Activated CD8-positive, alpha-beta T cell treated with anti-CD3 and anti-CD28 coated beads, Interleukin-2, amount 10 ng/mL, durations not matched to agents 7 days and 5 days (primary cell): ENCODE measurements at regions of chr7 and their contacts with region 1.

Region 1: GRCh38 chr7:132580717-132581285 is 4.5 kb upstream of the PLXNA4 start:
- DNase-seq: peak; percentile 89
- ATAC-seq: peak; percentile 78
- H3K4me3 Mint-ChIP-seq: no peak overlapping the region
- H3K27ac Mint-ChIP-seq: no peak overlapping the region
- H3K4me1 Mint-ChIP-seq: peaks cover 30% of the 10 kb centered on the region
- H3K27me3 Mint-ChIP-seq: peaks cover 38% of the 10 kb centered on the region

Region 2: GRCh38 chr7:132318352-132319318 is 262.2 kb before region 1 on chr7:
- CTCF ChIA-PET with region 1: interaction called, 129 read pairs
- POLR2A ChIA-PET with region 1: interaction called, 3 read pairs
- DNase-seq: peak; percentile 88
- ATAC-seq: peak; percentile 97
- H3K4me3 Mint-ChIP-seq: peak overlapping the region; percentile 32
- H3K27ac Mint-ChIP-seq: peak overlapping the region; percentile 3
- H3K4me1 Mint-ChIP-seq: peaks cover 67% of the 10 kb centered on the region
- H3K27me3 Mint-ChIP-seq: peaks cover 31% of the 10 kb centered on the region

Region 3: DNA sequence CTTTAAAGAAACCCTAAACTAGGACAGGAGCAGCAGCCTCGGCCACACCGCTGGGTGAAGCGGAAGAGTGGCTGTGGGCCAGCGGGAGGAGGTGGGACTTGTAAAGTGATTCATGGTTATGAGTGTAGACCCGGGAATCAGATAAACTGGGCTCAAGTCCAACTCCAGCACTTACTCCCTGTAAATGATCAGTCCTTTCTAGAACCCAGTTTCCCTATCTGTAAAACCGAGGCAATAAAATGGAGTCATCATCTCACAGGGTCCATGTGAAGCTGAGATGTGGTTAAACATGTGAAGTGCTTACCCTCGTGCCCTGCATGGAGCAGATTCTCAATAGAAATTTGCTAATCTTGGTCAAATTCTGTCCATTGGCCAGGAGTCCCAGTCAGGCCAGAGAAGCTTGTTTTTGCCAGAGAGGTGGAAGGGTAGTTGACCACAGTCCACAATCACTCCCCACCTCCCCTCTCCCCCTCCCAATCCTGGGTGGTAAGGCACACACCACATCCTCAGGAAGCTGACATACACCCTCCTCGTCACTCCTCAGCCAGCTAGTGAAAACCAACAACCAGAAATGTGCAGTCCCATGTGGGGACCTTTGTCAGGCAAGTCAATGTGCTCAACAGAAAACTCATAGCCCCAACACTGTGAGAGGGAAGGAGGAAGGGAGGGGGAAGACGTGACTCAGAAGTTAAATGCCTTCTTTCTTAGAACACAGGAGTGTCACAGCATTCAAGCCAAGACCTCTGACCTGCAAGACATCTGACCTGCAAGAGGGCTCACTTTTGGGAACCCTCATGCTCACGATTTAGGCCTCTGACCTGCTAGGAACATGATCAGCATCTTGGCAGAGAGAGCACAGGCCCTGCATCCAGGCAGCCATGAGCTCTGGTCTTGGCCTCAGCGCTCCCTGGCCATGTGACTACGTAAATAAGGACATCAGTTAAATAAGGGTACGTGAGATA is 149.7 kb before region 1 on chr7:
- CTCF ChIA-PET with region 1: interaction called, 19 read pairs
- POLR2A ChIA-PET with region 1: no interaction called
- DNase-seq: peak; percentile 90
- ATAC-seq: peak; percentile 88
- H3K4me3 Mint-ChIP-seq: peak overlapping the region; percentile 3
- H3K27ac Mint-ChIP-seq: peak overlapping the region; percentile 89
- H3K4me1 Mint-ChIP-seq: peaks cover 98% of the 10 kb centered on the region
- H3K27me3 Mint-ChIP-seq: no peaks in the 10 kb centered on the region

Region 4: DNA sequence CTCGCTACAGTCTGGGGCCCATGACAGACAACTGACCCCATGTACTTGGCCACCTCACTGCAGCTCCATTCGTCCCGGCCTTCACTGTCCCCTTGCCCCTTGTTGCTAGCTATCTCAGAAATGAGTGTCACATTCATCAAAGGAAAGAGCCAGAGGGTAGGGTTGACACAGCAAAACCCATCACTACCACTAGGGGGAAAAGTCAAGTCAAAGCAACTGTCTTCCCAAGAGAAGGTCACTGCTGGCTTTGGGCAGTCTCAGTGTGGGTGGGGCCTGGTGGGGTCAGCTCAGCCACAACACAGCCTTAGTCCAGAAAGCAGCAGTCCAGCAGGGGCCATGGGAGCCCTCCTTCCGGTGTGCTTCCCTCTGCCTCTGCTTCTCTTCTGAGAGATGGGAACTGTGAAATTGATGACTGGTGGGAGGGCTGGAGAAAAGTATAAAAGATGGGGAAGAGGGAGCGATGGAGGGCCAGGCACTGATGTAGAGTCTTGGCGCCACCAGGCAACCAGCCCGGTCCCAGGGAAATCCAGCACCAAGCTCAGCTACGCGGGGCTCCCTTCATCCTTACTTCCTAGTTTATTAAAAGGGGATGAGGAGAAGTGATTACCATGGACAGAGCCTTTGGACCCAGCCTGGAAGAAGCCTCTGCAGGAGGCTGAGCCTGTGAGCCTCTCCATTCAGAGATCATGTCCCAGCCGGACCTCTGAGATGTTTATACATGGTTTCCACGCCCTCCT is 62.5 kb before region 1 on chr7:
- CTCF ChIA-PET with region 1: interaction called, 15 read pairs
- POLR2A ChIA-PET with region 1: no interaction called
- DNase-seq: peak; percentile 42
- ATAC-seq: no peak
- H3K4me3 Mint-ChIP-seq: no peak overlapping the region
- H3K27ac Mint-ChIP-seq: no peak overlapping the region
- H3K4me1 Mint-ChIP-seq: peaks cover 38% of the 10 kb centered on the region
- H3K27me3 Mint-ChIP-seq: no peaks in the 10 kb centered on the region

Region 5: DNA sequence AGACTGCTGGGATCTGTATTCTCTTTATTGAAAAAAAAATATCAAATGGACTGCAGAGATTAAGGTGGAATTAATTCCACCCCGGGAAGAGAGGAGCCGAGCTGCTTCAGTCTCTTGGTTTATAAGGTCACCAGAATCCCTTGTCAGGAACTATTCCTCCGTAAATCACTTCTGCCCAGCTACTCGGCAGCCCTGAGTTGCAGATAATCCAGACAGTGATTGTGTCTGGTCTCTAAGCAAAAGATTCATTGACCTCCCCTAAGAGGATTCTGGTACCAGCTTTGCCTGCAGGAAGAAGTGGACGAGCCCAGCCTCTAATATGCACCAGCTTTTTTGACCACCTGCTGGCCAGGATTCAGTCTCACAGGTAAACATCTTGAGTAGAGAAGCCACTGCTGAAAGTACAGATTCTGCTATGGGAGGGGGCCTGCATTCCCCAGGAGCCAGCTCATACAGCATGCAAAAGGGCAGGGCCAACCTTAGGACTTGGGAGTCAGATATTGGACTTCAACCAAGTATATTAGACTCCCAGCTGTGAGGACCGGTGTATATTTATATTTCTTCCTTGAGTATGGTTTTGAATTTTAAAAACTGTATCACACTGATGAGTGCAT is 22.5 kb after region 1 on chr7:
- CTCF ChIA-PET with region 1: interaction called, 12 read pairs
- POLR2A ChIA-PET with region 1: no interaction called
- DNase-seq: no peak
- ATAC-seq: no peak
- H3K4me3 Mint-ChIP-seq: no peak overlapping the region
- H3K27ac Mint-ChIP-seq: no peak overlapping the region
- H3K4me1 Mint-ChIP-seq: no peaks in the 10 kb centered on the region
- H3K27me3 Mint-ChIP-seq: peaks cover 14% of the 10 kb centered on the region